Activated CD4-positive, alpha-beta T cell treated with anti-CD3 and anti-CD28 coated beads, Interleukin-2, amount 10 ng/mL, durations not matched to agents 24 days and 14 days (primary cell): ENCODE measurements at regions of chr3 and their contacts with region 1.

Region 1: GRCh38 chr3:155912579-155913190 is 42.2 kb downstream of the GMPS start:
- DNase-seq: no peak
- H3K4me3 Mint-ChIP-seq: no peak overlapping the region
- H3K27ac Mint-ChIP-seq: no peak overlapping the region
- H3K4me1 Mint-ChIP-seq: peaks cover 18% of the 10 kb centered on the region
- H3K27me3 Mint-ChIP-seq: no peaks in the 10 kb centered on the region

Region 2: GRCh38 chr3:155772801-155773200 is 139.9 kb before region 1 on chr3:
- intact Hi-C with region 1: no loop called
- DNase-seq: no peak
- H3K4me3 Mint-ChIP-seq: no peak overlapping the region
- H3K27ac Mint-ChIP-seq: no peak overlapping the region
- H3K4me1 Mint-ChIP-seq: no peaks in the 10 kb centered on the region
- H3K27me3 Mint-ChIP-seq: no peaks in the 10 kb centered on the region

Region 3: DNA sequence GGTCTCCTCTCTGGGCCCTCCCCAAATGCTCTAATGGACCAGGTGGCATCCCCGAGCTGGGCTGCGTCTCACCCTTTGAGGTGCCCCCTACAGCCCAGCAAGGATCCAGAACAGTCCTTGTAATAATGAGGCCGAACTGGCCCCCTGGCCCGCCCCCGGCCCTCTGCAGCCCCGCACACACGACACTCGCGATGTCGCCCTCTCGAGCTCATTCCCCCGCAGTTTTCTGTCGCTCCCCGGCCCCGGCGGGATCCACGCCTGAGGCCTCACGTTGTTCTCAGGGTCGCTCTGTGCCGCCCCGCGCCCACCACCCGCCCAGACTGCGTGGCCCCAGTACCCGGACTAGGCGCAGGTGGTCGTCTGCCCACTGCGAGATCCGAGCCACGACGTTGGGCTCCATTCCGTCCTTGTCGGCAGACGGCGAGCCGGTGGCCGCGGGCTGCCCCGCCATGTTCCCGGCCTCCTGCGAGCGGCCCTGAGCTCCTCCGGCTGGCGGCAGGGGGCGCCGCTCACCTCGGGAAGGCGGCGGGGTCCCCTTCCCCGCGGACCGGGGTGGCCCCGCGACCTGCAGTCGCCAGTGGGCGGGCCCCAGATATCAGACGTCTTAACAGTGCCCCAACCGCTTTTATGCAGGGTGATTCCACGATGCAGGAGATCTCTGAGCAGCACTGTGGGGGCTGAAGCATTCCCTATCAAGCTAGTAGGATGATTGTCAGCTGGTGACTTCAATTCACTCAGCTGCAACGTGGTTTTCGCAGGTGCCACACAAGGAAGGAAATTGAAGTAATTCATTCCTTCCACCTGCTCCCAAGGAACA is 106.7 kb before region 1 on chr3 and contains the start of gene C3orf33:
- intact Hi-C with region 1: loop called (anchors 10 kb)
- DNase-seq: peak; percentile 93
- H3K4me3 Mint-ChIP-seq: peak within 1 kb of the TSS; percentile 89
- H3K27ac Mint-ChIP-seq: peak within 1 kb of the TSS; percentile 75
- H3K4me1 Mint-ChIP-seq: peaks cover 10% of the 10 kb centered on the region
- H3K27me3 Mint-ChIP-seq: peaks cover 13% of the 10 kb centered on the region
- total RNA-seq, gene C3orf33: 1.6 and 2.1 TPM in 2 replicates

Region 4: GRCh38 chr3:155870133-155870944 is 42.3 kb before region 1 on chr3 and contains the start of gene GMPS:
- intact Hi-C with region 1: loop called (anchors 5 kb)
- DNase-seq: no peak
- H3K4me3 Mint-ChIP-seq: peak within 1 kb of the TSS; percentile 88
- H3K27ac Mint-ChIP-seq: peak within 1 kb of the TSS; percentile 96
- H3K4me1 Mint-ChIP-seq: peaks cover 19% of the 10 kb centered on the region
- H3K27me3 Mint-ChIP-seq: no peaks in the 10 kb centered on the region
- total RNA-seq, gene GMPS: 150 and 151 TPM in 2 replicates

Region 5: GRCh38 chr3:155948476-155948875 is 35.8 kb after region 1 on chr3:
- intact Hi-C with region 1: no loop called
- DNase-seq: no peak
- H3K4me3 Mint-ChIP-seq: no peak overlapping the region
- H3K27ac Mint-ChIP-seq: no peak overlapping the region
- H3K4me1 Mint-ChIP-seq: no peaks in the 10 kb centered on the region
- H3K27me3 Mint-ChIP-seq: no peaks in the 10 kb centered on the region

Region 6: DNA sequence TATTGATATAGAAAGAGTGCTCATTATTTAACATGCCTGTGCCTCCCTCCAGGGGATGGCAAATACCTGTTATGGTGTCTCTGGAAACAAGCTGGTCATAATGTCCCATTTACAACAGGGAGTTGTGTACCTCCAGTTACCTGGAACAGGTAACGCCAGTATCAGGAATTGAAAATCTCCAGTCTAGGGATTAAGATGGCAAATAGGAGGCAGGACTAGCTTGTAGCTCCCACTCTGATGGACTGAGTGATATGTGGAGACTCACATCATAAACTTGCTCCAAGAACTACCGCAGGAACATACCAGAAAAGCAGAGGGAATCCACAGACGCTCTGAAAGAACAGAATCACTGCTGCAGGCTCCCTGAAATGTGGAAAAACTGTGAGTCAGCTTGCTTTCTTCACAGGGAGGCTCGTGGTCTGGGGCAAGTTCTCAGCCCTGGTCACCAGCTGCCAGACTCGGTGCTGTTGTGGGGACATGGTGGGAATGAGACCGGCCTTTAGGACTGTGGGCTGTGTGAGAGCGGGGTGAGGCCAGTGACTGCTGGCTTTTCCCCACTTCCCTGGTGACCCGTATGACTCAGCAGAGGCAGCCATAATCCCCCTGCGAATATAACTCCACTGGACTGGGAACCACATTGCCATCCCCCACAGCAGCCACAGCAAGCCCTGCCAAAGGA is 305.1 kb after region 1 on chr3:
- intact Hi-C with region 1: no loop called
- DNase-seq: no peak
- H3K4me3 Mint-ChIP-seq: no peak overlapping the region
- H3K27ac Mint-ChIP-seq: no peak overlapping the region
- H3K4me1 Mint-ChIP-seq: no peaks in the 10 kb centered on the region
- H3K27me3 Mint-ChIP-seq: peaks cover 10% of the 10 kb centered on the region